GM12878 (cell line): ENCODE measurements at regions of chr6 and their contacts with region 1.

Region 1: DNA sequence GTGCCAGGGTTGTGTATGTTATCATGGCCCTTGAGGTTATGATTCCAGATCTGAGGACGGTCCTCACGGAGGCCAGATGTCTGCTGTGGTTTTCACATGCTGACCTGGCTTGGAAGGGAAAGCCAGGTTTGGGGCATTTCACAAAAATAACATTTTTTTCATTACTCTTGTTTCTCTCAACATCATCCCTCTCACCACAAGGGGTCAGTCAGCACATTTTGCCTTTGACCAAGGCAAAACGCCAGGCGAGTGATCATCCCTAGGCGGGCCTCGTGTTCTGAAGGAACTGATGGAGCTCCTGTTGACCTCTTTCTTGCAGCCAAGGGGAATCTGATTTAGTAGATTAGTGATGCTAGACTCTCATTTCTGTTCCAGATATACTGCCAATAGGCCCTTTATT is 133.5 kb downstream of the TBC1D7 start:
- DNase-seq: no peak
- ATAC-seq: peak; percentile 89
- H3K4me3 ChIP-seq: no peak overlapping the region
- H3K27ac ChIP-seq: no peak overlapping the region
- H3K4me1 ChIP-seq: no peaks in the 10 kb centered on the region
- H3K27me3 ChIP-seq: peaks cover 1 to 10% of the 10 kb centered on the region in 2 experiments; a peak in 3 of 4 replicates
- CTCF ChIP-seq: peak; percentile 68 to 76 (median 75)
- EP300 ChIP-seq: no peak
- POLR2A ChIP-seq: no peak
- RAD21 ChIP-seq: peak; percentile 92

Region 2: GRCh38 chr6:13261464-13261994 is 66.7 kb after region 1 on chr6:
- CTCF ChIA-PET with region 1: interaction called, 3 read pairs
- POLR2A ChIA-PET with region 1: no interaction called
- RAD21 ChIA-PET with region 1: interaction called, 11 read pairs
- SMC1A ChIA-PET with region 1: interaction called, 4 read pairs
- in situ Hi-C with region 1: no loop called
- intact Hi-C with region 1: no loop called
- DNase-seq: peak; percentile 80
- ATAC-seq: peak; percentile 57
- H3K4me3 ChIP-seq: peak overlapping the region; percentile 52; the same call in 1 of the 2 replicates
- H3K27ac ChIP-seq: peak overlapping the region; percentile 50
- H3K4me1 ChIP-seq: peaks cover 59% of the 10 kb centered on the region
- H3K27me3 ChIP-seq: no peaks in the 10 kb centered on the region
- CTCF ChIP-seq: no peak
- EP300 ChIP-seq: peak in 1 of 2 experiments; percentile 63; a peak in 1 of 4 replicates
- POLR2A ChIP-seq: peak; percentile 7; the same call in 1 of the 2 replicates
- RAD21 ChIP-seq: no peak; the same call in 1 of the 2 replicates

Region 3: DNA sequence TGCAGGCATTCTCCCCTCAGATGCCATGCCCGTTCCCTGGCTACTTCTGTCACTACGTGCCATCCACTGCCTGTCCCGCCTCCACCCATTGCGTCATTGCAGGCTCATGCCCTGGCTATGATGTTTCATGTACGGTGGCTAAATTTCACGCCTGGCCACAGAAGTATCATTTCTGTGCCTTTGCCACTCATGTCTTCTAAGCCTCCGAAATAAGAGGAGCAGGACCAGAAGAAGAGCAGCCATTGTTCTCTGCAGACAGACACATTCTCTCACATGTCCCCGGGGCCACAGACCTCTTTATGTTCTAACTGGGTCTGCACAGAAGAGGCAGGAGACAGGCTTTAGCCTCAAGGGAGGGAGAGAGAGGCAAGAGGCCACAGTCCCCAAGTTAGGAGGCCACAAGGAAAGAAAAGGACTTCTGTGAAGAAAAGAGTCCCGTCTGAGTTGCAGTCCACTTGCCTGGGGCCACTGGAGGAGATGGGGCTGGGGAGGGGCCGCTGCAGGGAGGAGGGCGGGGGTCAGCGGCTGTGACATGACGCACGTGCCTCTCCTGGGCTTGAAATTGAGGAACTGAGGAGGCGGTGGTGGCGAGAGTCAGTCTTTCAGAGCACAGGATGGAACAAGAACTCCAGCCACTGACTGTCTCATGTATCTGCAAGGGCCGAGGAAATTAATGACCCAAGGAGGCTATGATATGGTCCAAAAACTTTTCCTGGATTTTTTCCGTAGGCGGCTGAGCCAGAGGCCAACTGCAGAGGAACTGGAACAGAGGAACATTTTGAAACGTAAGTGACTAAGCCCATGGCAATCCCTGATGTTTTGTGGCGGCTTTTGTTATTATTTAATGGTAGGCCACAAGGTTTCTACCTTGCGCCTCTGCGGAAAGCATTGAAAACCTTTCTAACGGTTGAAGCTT is 77.5 kb after region 1 on chr6:
- CTCF ChIA-PET with region 1: interaction called, 54 read pairs
- POLR2A ChIA-PET with region 1: interaction called, 3 read pairs
- RAD21 ChIA-PET with region 1: interaction called, 21 read pairs
- SMC1A ChIA-PET with region 1: interaction called, 24 read pairs
- in situ Hi-C with region 1: no loop called
- intact Hi-C with region 1: no loop called
- DNase-seq: peak; percentile 67
- ATAC-seq: peak; percentile 72
- H3K4me3 ChIP-seq: peak overlapping the region; percentile 82
- H3K27ac ChIP-seq: peak overlapping the region; percentile 92
- H3K4me1 ChIP-seq: peaks cover 20% of the 10 kb centered on the region
- H3K27me3 ChIP-seq: no peaks in the 10 kb centered on the region; a peak in 1 of 4 replicates
- CTCF ChIP-seq: peak in 2 of 3 experiments; percentile 20 to 37; a peak in 3 of 6 replicates
- EP300 ChIP-seq: peak; percentile 53 to 72; a peak in 1 of 4 replicates
- POLR2A ChIP-seq: peak; percentile 86
- RAD21 ChIP-seq: peak; percentile 44; the same call in 1 of the 2 replicates

Region 4: GRCh38 chr6:13277836-13278563 is 83.1 kb after region 1 on chr6:
- CTCF ChIA-PET with region 1: interaction called, 54 read pairs
- POLR2A ChIA-PET with region 1: interaction called, 3 read pairs
- RAD21 ChIA-PET with region 1: interaction called, 21 read pairs
- SMC1A ChIA-PET with region 1: interaction called, 24 read pairs
- in situ Hi-C with region 1: no loop called
- intact Hi-C with region 1: loop called (anchors 1 kb)
- DNase-seq: no peak
- ATAC-seq: peak; percentile 53
- H3K4me3 ChIP-seq: no peak overlapping the region
- H3K27ac ChIP-seq: no peak overlapping the region
- H3K4me1 ChIP-seq: peaks cover 33% of the 10 kb centered on the region
- H3K27me3 ChIP-seq: no peaks in the 10 kb centered on the region; a peak in 1 of 4 replicates
- CTCF ChIP-seq: peak; percentile 57 to 69 (median 58)
- EP300 ChIP-seq: no peak
- POLR2A ChIP-seq: no peak
- RAD21 ChIP-seq: peak; percentile 58

Region 5: GRCh38 chr6:13614926-13615798 is 420.3 kb after region 1 on chr6 and contains the start of gene NOL7:
- CTCF ChIA-PET with region 1: interaction called, 3 read pairs
- POLR2A ChIA-PET with region 1: no interaction called
- RAD21 ChIA-PET with region 1: no interaction called
- SMC1A ChIA-PET with region 1: no interaction called
- in situ Hi-C with region 1: no loop called
- intact Hi-C with region 1: loop called (anchors 10 kb)
- DNase-seq: peak; percentile 95
- ATAC-seq: peak; percentile 91
- H3K4me3 ChIP-seq: peak within 1 kb of the TSS; percentile 94
- H3K27ac ChIP-seq: peak within 1 kb of the TSS; percentile 96
- H3K4me1 ChIP-seq: peaks cover 17% of the 10 kb centered on the region
- H3K27me3 ChIP-seq: no peaks in the 10 kb centered on the region
- CTCF ChIP-seq: peak; percentile 96 to 99 (median 98); a peak in 5 of 6 replicates
- EP300 ChIP-seq: no peak
- POLR2A ChIP-seq: peak; percentile 99
- RAD21 ChIP-seq: no peak
- polyA plus RNA-seq, gene NOL7: 12.2 to 31.2 TPM